Mammary epithelial cell (primary cell): ENCODE measurements at regions of chr1 and their contacts with region 1.

Region 1: DNA sequence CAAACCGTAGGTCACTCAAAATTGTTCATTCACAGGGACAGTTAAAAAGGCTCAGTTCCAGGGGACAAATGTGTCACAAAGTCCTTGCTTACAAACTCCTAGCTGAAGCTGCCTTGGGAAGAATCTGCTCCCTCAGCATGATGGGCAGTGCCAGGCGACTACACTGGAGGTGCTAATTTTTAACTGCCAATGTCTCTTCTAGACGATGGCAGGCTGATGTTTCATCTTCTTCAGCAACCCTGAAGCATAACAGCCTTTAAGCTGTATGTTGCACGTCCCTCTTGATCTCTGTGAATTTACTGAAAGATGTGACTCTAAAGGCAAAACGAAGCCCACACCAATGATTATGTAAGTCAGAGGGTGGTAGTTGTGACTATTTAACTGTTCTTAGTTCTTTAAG is 11.3 kb downstream of the COA7 start:
- DNase-seq: no peak
- H3K4me3 ChIP-seq: no peak overlapping the region
- H3K27ac ChIP-seq: no peak overlapping the region
- H3K4me1 ChIP-seq: no peaks in the 10 kb centered on the region
- H3K27me3 ChIP-seq: no peaks in the 10 kb centered on the region
- CTCF ChIP-seq: no peak

Region 2: GRCh38 chr1:52141513-52142219 is 545.2 kb before region 1 on chr1 and contains the start of gene ZFYVE9:
- CTCF ChIA-PET with region 1: no interaction called
- dilution Hi-C with region 1: no loop called
- in situ Hi-C with region 1: no loop called
- intact Hi-C with region 1: loop called (anchors 5 kb)
- DNase-seq: peak; percentile 76
- H3K4me3 ChIP-seq: peak within 1 kb of the TSS; percentile 84 to 95 (median 94)
- H3K27ac ChIP-seq: peak within 1 kb of the TSS; percentile 95
- H3K4me1 ChIP-seq: peaks cover 33% of the 10 kb centered on the region
- H3K27me3 ChIP-seq: no peaks in the 10 kb centered on the region
- CTCF ChIP-seq: peak; percentile 61 to 65
- total RNA-seq, gene ZFYVE9: 35.4 to 42.0 TPM

Region 3: DNA sequence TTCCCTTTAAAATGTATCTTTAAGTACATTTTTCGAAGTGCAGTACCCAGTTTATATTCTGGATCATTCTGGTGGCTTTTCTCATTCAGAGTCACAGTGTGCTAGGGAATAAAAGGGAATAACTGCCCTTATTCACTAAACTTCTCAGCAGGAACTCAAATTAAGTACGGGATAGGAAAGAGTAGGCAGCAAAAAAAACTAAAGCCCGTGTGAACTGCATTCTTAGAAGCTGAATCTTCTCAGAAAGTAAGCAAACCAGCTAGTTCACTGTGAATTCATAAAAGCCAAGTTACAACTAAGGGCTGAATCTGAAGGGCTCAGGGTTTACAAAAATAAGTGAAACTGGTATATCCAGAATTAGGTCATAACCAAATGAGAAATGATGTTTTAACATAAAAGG is 260.5 kb before region 1 on chr1:
- CTCF ChIA-PET with region 1: no interaction called
- dilution Hi-C with region 1: no loop called
- in situ Hi-C with region 1: loop called in 1 of 2 experiments (anchors 25 kb)
- intact Hi-C with region 1: loop called (anchors 5 kb)
- DNase-seq: peak; percentile 31
- H3K4me3 ChIP-seq: no peak overlapping the region
- H3K27ac ChIP-seq: no peak overlapping the region
- H3K4me1 ChIP-seq: no peaks in the 10 kb centered on the region
- H3K27me3 ChIP-seq: no peaks in the 10 kb centered on the region
- CTCF ChIP-seq: no peak

Region 4: DNA sequence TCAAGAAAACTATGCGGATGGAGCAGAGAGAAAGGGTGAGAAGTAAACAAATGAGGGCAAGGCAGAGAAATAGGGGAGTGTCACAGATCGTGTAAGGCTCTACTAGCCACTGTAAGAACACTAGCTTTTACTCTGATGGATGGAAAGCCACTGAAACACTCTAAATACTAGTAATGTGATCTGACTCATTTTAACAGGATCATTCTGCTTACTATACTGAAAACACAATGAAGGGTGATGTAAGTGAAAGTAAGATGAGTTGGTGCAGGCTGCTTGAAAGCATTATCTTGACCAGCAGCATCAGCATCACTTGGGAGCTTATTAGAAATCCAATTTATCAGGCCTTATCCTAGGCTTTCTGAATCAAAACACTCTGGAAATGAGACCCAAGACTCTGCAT is 166.7 kb before region 1 on chr1:
- CTCF ChIA-PET with region 1: no interaction called
- dilution Hi-C with region 1: no loop called
- in situ Hi-C with region 1: no loop called
- intact Hi-C with region 1: loop called (anchors 1 kb)
- DNase-seq: peak; percentile 18
- H3K4me3 ChIP-seq: no peak overlapping the region
- H3K27ac ChIP-seq: no peak overlapping the region
- H3K4me1 ChIP-seq: no peaks in the 10 kb centered on the region
- H3K27me3 ChIP-seq: no peaks in the 10 kb centered on the region
- CTCF ChIP-seq: no peak

Region 5: DNA sequence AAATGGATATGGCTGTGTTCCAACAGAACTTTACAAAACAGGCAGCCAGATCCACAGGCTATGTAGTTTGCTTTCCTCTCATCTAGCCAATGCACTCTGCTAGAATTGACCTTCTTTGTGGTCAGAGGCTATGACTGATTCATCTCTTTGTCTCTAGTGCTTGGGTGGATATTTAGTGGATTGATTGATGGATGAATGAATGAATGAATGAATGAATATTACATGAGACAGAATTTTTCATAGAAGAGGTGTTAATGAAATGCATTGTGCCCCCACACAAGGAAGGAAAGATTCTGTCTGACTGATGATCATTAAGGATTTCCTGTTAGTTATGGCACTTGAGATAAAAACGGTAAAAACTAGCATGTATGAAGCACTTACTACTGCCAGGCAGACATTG is 105.2 kb after region 1 on chr1:
- CTCF ChIA-PET with region 1: no interaction called
- dilution Hi-C with region 1: no loop called
- in situ Hi-C with region 1: no loop called
- intact Hi-C with region 1: no loop called
- DNase-seq: no peak
- H3K4me3 ChIP-seq: no peak overlapping the region
- H3K27ac ChIP-seq: no peak overlapping the region
- H3K4me1 ChIP-seq: no peaks in the 10 kb centered on the region
- H3K27me3 ChIP-seq: no peaks in the 10 kb centered on the region
- CTCF ChIP-seq: no peak